AG04450 (cell line): ENCODE measurements at regions of chr12 and their contacts with region 1.

Region 1: DNA sequence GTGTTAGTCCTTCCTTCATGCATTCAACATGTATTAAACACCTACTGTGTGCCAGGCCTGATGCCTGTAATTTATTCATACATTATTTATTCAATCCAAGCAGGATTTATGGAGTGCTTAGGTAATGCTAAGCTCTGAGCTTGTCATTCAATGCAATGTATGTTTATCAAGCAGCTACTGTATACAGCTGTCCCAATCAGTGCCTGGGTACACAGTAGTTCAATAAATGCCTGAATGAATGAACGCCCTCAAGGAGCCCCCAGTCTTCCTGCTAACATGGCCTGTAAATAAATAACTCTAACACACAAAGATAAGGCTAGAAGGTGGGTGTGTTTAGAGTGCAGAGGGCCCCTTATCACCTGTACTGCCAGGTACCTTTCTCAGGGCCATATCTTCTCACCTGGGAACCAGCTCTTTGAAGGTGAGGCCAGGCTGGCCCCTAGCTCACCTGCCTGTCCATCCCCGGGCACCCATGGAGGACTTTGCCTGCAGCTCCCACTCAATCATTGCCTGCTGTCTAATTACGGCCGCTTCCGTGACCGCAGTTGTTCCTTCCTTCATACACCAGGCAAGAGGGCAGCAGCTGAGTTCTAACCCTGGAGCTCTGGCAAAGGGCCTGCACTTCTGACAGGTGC is 20.0 kb upstream of the KDM2B start:
- DNase-seq: no peak
- H3K4me3 ChIP-seq: no peak overlapping the region
- H3K27ac ChIP-seq: no peak overlapping the region
- H3K27me3 ChIP-seq: no peaks in the 10 kb centered on the region
- CTCF ChIP-seq: no peak

Region 2: GRCh38 chr12:121626087-121626852 is 25.5 kb after region 1 on chr12 and contains the start of gene ORAI1:
- CTCF ChIA-PET with region 1: interaction called, 10 read pairs
- POLR2A ChIA-PET with region 1: no interaction called
- DNase-seq: peak; percentile 73
- H3K4me3 ChIP-seq: peak within 1 kb of the TSS; percentile 70
- H3K27ac ChIP-seq: peak within 1 kb of the TSS; percentile 68
- H3K27me3 ChIP-seq: no peaks in the 10 kb centered on the region
- CTCF ChIP-seq: no peak
- polyA plus RNA-seq, gene ORAI1: 13.6 and 19.0 TPM in 2 replicates